Activated CD8-positive, alpha-beta T cell treated with anti-CD3 and anti-CD28 coated beads for 36 hours (primary cell): ENCODE measurements at regions of chr11 and their contacts with region 1.

Region 1: GRCh38 chr11:65251476-65251875 is 10.3 kb upstream of the POLA2 start:
- DNase-seq: no peak
- ATAC-seq: no peak
- H3K4me3 Mint-ChIP-seq: no peak overlapping the region
- H3K27ac Mint-ChIP-seq: no peak overlapping the region
- H3K4me1 Mint-ChIP-seq: no peaks in the 10 kb centered on the region
- H3K27me3 Mint-ChIP-seq: peaks cover 7% of the 10 kb centered on the region
- CTCF ChIP-seq: no peak

Region 2: DNA sequence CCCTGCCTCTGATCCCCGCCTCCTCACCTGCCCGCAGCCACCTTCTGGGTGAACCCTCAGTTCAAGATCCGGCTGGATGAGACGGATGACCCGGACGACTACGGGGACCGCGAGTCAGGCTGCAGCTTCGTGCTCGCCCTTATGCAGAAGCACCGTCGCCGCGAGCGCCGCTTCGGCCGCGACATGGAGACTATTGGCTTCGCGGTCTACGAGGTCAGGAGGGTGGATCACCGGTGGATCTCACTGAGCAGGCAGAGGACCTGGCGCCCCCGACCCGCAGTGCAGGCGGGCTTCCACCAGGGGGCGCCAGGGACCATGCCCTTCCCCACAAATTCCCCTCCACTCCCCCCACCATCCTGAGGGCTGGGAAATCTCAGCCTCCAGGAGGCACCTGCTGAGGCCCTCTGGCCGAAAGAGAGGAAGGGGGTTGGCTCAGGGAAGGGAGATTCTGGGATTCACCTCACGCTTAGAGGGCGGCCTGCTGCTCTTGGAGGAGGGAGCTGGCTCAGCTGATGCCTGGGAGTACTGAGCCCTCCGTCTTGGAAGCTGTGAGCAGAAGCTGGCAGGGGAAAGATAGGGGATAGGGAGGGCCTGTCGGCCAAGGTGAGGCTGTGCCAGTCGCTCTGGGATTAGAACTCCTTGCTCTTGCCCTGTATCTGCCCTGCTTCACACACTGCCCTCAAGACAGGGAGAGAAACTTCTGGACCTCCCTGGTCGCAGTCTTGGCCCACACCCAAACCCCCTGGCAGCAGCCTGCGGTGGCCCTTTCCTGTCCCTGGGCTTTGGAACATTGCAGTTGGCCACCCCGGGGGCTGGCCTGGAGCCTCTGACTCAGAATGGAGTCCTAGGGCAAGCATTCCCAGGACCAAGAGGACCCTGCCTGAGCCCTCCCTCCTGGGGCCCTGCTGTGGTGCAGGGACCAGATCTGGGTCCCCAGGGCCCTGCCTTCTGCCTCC is 46.6 kb before region 1 on chr11:
- CTCF ChIA-PET with region 1: interaction called, 6 read pairs
- POLR2A ChIA-PET with region 1: no interaction called
- intact Hi-C with region 1: loop called (anchors 10 kb)
- DNase-seq: peak; percentile 55
- ATAC-seq: peak; percentile 90
- H3K4me3 Mint-ChIP-seq: no peak overlapping the region
- H3K27ac Mint-ChIP-seq: no peak overlapping the region
- H3K4me1 Mint-ChIP-seq: peaks cover 3% of the 10 kb centered on the region
- H3K27me3 Mint-ChIP-seq: no peaks in the 10 kb centered on the region
- CTCF ChIP-seq: peak; percentile 98

Region 3: DNA sequence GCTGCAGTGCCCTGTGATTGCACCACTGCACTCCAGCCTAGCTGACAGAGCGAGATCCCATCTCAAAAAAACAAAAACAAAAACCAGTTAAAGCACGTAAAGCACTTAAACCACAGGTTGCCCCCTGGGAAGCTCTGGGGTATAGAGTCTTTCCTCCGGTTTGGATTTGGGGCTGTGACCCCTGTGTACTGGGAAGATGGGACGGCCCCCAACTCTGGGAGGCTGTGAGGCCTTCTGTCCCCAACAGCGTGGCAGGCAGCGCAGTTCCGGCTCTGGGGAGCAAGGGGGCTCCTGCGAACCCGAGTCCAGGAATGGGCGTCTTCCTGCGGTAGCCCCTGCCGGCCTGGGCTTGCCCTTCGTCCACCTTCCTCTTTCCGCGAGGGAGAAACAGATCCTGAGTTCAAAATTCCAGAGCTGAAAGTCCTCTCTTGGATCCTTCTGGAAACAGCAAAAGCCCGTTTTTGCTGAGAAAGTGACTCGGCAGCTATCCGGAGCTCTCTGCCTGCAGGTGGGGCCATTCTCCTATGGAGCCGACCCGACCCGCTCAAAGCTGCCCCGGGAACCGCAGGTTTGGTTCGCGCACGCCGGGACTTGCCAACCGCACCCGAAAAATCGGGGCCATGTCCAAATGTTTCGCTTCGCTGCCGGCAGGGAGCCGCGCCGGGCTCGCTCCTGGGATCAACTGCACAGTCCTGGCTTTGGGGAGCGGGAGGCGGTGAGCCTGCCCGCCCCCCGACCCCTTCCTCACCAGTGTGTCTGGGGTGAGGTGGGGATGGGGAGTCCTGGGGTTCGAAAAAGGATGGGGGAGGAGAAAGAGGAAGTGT is 26.0 kb before region 1 on chr11:
- CTCF ChIA-PET with region 1: interaction called, 12 read pairs
- POLR2A ChIA-PET with region 1: no interaction called
- intact Hi-C with region 1: no loop called
- DNase-seq: peak; percentile 76
- ATAC-seq: peak; percentile 85
- H3K4me3 Mint-ChIP-seq: peak overlapping the region; percentile 72
- H3K27ac Mint-ChIP-seq: no peak overlapping the region
- H3K4me1 Mint-ChIP-seq: peaks cover 7% of the 10 kb centered on the region
- H3K27me3 Mint-ChIP-seq: peaks cover 19% of the 10 kb centered on the region
- CTCF ChIP-seq: peak; percentile 58

Region 4: DNA sequence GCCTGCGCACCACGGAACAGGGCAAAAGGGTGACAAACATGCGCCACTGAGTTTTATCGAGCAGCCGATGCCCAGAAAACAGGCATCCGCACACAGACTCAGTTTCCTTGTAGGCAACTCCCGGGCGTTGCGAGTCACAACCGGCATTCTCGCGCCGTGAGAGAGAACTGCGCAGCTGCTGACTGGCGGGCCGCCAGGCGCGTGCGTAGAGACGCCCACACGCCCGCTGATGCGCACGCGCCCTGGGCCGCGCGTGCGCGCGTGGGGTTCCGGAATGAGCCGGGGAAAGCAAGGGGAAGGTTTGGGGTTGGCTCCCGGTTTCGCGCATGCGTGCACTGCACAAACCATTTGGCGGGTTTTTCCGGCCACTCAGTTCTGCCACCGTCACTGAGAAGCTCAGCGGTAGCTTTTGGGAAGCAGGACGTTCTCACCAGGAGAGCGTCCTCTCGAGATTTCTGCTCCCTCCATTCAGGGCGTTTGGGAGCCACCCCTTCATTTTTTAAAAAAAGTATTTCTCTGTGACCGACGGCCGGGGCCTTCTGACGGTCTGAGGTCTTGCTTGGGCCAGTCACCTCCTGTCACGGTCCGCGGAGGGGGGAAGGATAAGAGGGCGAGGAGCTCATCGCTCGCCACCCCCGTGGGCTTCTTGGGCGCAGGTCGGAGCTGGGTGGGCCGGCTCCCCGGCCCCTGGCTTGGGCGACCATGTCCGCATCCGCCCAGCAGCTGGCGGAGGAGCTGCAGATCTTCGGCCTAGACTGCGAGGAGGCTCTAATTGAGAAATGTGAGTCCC is 10.3 kb after region 1 on chr11 and contains the start of gene POLA2:
- CTCF ChIA-PET with region 1: interaction called, 19 read pairs
- POLR2A ChIA-PET with region 1: interaction called, 9 read pairs
- intact Hi-C with region 1: no loop called
- DNase-seq: peak; percentile 95
- ATAC-seq: peak; percentile 86
- H3K4me3 Mint-ChIP-seq: peak within 1 kb of the TSS; percentile 91
- H3K27ac Mint-ChIP-seq: peak within 1 kb of the TSS; percentile 95
- H3K4me1 Mint-ChIP-seq: peaks cover 35% of the 10 kb centered on the region
- H3K27me3 Mint-ChIP-seq: no peaks in the 10 kb centered on the region
- CTCF ChIP-seq: no peak
- total RNA-seq, gene POLA2: 55.2 to 63.8 TPM